Activated CD4-positive, alpha-beta T cell treated with anti-CD3 and anti-CD28 coated beads for 36 hours (primary cell): ENCODE measurements at regions of chr17 and their contacts with region 1.

Region 1: DNA sequence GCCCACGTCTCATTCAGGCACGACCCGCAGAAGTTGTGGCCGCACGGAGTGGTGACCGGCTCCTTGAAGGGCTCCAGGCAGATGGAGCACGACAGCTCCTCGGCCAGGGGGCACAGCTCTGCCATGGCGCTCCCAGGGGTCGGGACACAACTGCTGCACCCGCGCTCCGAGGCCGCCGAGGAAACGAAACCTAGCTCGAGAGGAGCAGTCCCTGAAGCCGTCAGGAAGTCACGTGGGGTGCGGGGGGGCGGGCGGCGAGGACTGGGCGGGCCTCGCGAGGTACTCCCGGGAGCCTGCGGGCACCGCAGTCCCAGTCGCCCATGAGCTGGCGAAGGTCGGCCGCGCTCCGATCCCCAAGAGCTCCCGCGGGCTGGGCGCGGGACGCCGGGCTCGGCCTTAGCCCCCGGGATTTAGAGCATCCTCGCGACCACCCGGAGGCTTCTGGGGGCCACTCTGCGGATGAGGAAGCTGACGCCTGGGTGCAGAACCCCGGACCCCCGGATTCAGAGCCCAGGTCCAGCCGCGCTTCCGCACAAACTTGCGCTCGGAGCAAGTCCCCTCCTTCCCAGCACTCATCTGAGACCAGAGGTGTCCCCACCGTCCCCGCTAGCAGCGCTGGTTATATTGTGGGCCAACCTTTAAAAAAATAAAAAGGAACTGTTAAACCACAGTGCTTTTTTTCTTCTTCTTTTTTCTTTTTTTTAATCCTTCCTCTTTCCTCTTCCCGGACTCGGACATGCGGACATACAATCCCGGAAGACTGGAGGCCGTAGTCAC is at the start of gene TRIM25:
- DNase-seq: peak; percentile 97
- ATAC-seq: peak; percentile 66
- H3K4me3 Mint-ChIP-seq: peak within 1 kb of the TSS; percentile 90
- H3K27ac Mint-ChIP-seq: peak within 1 kb of the TSS; percentile 95
- H3K4me1 Mint-ChIP-seq: peaks cover 61% of the 10 kb centered on the region
- H3K27me3 Mint-ChIP-seq: no peaks in the 10 kb centered on the region
- total RNA-seq, gene TRIM25: 173 to 241 TPM

Region 2: GRCh38 chr17:56592487-56593085 is 321.5 kb before region 1 on chr17:
- CTCF ChIA-PET with region 1: no interaction called
- POLR2A ChIA-PET with region 1: no interaction called
- intact Hi-C with region 1: loop called in 1 of 2 experiments (anchors 5 kb)
- DNase-seq: peak; percentile 82
- ATAC-seq: peak; percentile 60
- H3K4me3 Mint-ChIP-seq: peak overlapping the region; percentile 64
- H3K27ac Mint-ChIP-seq: no peak overlapping the region
- H3K4me1 Mint-ChIP-seq: peaks cover 20% of the 10 kb centered on the region
- H3K27me3 Mint-ChIP-seq: peaks cover 23% of the 10 kb centered on the region

Region 3: GRCh38 chr17:56977673-56978395 is 63.8 kb after region 1 on chr17 and contains the start of gene SCPEP1:
- CTCF ChIA-PET with region 1: no interaction called
- POLR2A ChIA-PET with region 1: no interaction called
- intact Hi-C with region 1: loop called in 1 of 2 experiments (anchors 1 kb)
- DNase-seq: peak; percentile 90
- ATAC-seq: peak; percentile 96
- H3K4me3 Mint-ChIP-seq: peak within 1 kb of the TSS; percentile 83
- H3K27ac Mint-ChIP-seq: peak within 1 kb of the TSS; percentile 74
- H3K4me1 Mint-ChIP-seq: peaks cover 18% of the 10 kb centered on the region
- H3K27me3 Mint-ChIP-seq: peaks cover 3% of the 10 kb centered on the region
- total RNA-seq, gene SCPEP1: 9.7 to 14.8 TPM